ENCODE measurements at regions of chr2 and their contacts with region 1.

Region 1: DNA sequence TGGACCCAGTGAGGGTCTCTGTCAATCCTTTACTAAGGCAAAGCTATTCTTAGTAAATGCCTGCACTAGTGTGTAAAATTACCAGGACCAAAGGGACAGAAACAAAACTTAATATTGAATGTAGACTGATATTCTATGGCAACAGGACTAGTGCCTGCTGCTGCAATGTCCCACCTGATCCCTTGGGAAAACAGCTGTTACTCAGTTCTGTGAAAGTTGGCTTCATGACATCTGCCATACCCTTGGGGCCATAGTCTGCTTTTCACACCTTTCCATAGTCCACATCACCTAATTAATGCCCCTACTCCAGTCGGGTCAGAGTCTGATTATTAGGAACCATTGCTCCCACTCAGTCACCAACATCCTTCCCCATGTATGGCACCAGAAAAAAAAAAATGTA is 14.5 kb downstream of the DNAJC27 start:
- DNase-seq: no peak
- H3K4me3 ChIP-seq: no peak overlapping the region
- H3K27ac ChIP-seq: no peak overlapping the region
- H3K4me1 ChIP-seq: no peaks in the 10 kb centered on the region
- H3K27me3 ChIP-seq: no peaks in the 10 kb centered on the region
- CTCF ChIP-seq: no peak

Region 2: GRCh38 chr2:24466871-24467870 is 490.1 kb before region 1 on chr2:
- intact Hi-C with region 1: loop called (anchors 2 kb)
- DNase-seq: no peak
- H3K4me3 ChIP-seq: no peak overlapping the region
- H3K27ac ChIP-seq: no peak overlapping the region
- H3K4me1 ChIP-seq: no peaks in the 10 kb centered on the region
- H3K27me3 ChIP-seq: no peaks in the 10 kb centered on the region
- CTCF ChIP-seq: no peak

Region 3: GRCh38 chr2:24597181-24597870 is 359.9 kb before region 1 on chr2:
- intact Hi-C with region 1: no loop called
- DNase-seq: no peak
- H3K4me3 ChIP-seq: no peak overlapping the region
- H3K27ac ChIP-seq: no peak overlapping the region
- H3K4me1 ChIP-seq: no peaks in the 10 kb centered on the region
- H3K27me3 ChIP-seq: no peaks in the 10 kb centered on the region
- CTCF ChIP-seq: no peak

Measured in tibial artery (tissue), 4 donors.